BJ (cell line): ENCODE measurements at regions of chr5 and their contacts with region 1.

Region 1: GRCh38 chr5:135457424-135458071 is 5.4 kb upstream of the TIFAB start:
- DNase-seq: no peak
- H3K4me3 ChIP-seq: no peak overlapping the region
- H3K27me3 ChIP-seq: peaks cover 3% of the 10 kb centered on the region; the same call in 1 of the 2 replicates
- CTCF ChIP-seq: peak; percentile 66

Region 2: DNA sequence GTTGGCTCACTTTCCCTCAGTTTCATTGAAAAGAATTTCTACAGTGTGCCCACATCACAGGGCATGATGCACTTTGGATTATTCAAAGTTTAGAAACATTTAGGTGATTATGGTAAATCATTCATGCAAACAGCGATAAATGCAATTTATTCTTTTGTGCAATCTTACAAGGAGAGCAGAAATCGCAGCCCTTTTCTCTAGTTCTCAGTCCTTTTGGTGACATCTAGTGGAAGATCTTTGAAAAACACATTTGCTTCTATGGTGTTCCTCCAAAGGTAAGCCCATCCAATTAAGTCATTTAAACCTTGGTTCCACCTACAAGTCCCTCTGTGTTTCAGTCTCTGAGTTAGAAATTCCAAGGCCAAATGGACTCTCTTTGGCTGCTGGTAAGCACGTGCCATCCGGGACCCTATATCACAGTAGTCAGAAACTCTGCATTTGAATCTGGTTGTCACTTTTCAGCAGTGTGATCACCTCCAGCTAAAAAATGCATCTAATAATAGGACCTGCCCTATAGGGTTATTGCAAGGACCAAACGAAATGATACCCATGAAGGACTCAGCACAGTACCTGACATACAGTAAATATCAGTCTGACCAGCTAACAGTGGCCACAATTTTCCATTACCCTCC is 124.9 kb before region 1 on chr5:
- CTCF ChIA-PET with region 1: no interaction called
- POLR2A ChIA-PET with region 1: no interaction called
- DNase-seq: no peak
- H3K4me3 ChIP-seq: no peak overlapping the region
- H3K27me3 ChIP-seq: no peaks in the 10 kb centered on the region
- CTCF ChIP-seq: peak; percentile 63

Region 3: DNA sequence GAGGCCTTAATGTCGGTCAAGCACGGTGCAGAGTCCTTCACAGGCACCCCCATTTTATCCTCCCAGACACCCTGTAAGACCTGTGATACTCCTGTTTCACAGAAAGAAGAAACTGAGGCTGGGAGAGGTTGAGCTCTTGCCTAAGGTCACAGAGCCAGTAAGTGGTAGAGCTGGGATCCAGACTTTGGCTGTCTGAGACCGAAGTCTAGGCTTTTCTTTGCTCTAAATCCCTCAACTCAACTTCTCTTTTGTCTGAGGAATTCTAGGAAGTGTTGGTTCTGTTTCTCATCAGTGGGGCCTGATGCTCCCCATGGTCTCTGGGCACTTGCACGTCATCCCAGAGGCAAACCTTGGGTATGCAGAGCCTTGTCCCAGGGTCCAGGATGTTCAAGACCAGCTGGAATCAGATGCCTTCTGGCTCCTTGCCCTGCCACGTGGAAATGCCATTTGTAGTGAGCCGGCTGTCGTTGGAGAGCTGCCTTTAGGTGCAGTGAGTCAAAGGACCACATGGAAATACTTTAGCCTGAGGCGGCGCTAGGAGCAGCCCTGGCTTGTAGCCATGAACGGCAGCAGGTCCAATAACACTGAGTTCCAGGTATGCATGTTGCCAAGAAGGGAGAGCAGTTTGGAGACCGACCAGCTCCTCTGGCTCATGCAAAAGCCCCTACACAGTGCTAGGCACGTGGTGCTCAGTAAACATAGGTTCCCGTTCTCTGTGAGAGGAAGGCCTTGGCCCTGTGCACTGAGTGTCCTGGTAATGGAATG is 19.6 kb before region 1 on chr5:
- CTCF ChIA-PET with region 1: interaction called, 15 read pairs
- POLR2A ChIA-PET with region 1: no interaction called
- DNase-seq: peak; percentile 78
- H3K4me3 ChIP-seq: no peak overlapping the region
- H3K27me3 ChIP-seq: no peaks in the 10 kb centered on the region
- CTCF ChIP-seq: peak; percentile 28